Psoas muscle (tissue), 8 donors: ENCODE measurements at regions of chr18 and their contacts with region 1.

Region 1: GRCh38 chr18:21191596-21192307 is 50.3 kb upstream of the GREB1L start:
- DNase-seq: peak; percentile 28 to 59
- ATAC-seq: peak; percentile 39 to 77 (median 68)
- H3K4me3 ChIP-seq: no peak overlapping the region
- H3K27ac ChIP-seq: no peak overlapping the region
- H3K4me1 ChIP-seq: no peaks in the 10 kb centered on the region
- H3K27me3 ChIP-seq: no peaks in the 10 kb centered on the region
- CTCF ChIP-seq: peak; percentile 49

Region 2: DNA sequence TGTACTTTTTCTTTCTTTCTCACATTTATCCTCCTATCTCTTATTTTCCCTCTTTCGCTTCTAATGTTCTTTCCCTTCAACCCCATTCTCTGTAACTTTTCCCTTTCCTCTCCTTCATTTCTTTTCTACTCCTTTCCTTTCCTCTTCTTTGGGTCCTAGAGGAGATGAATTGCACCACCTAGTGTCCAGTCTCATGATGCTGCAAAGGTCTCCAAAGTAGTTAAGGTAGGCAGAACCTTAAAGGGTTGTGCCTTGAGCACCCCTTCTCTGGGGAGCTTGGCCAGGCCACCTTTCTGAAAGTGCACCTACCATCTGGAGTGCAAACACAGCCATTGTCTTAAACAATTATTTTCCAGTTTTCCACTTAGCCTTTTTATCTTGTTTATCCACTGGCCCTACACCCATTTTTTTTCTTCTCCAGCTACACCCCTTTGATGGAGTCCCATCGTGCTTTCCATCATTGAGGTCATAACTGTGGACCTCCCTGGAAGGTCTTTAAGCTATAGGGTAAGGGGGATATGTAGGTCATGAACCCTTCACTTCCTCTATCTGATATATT is 252.8 kb after region 1 on chr18:
- intact Hi-C with region 1: loop called (anchors 2 to 5 kb)
- DNase-seq: no peak
- ATAC-seq: peak; percentile 27 to 80 (median 70)
- H3K4me3 ChIP-seq: peak overlapping the region; percentile 37
- H3K27ac ChIP-seq: no peak overlapping the region
- H3K4me1 ChIP-seq: peaks cover 61% of the 10 kb centered on the region
- H3K27me3 ChIP-seq: no peaks in the 10 kb centered on the region
- CTCF ChIP-seq: peak; percentile 62

Region 3: GRCh38 chr18:21509062-21509461 is 317.3 kb after region 1 on chr18:
- intact Hi-C with region 1: loop called in 1 of 2 experiments (anchors 10 kb)
- DNase-seq: no peak
- ATAC-seq: peak in 3 of 4 donors; percentile 36 to 52 (median 45)
- H3K4me3 ChIP-seq: no peak overlapping the region
- H3K27ac ChIP-seq: no peak overlapping the region
- H3K4me1 ChIP-seq: no peaks in the 10 kb centered on the region
- H3K27me3 ChIP-seq: no peaks in the 10 kb centered on the region
- CTCF ChIP-seq: peak; percentile 11

Region 4: DNA sequence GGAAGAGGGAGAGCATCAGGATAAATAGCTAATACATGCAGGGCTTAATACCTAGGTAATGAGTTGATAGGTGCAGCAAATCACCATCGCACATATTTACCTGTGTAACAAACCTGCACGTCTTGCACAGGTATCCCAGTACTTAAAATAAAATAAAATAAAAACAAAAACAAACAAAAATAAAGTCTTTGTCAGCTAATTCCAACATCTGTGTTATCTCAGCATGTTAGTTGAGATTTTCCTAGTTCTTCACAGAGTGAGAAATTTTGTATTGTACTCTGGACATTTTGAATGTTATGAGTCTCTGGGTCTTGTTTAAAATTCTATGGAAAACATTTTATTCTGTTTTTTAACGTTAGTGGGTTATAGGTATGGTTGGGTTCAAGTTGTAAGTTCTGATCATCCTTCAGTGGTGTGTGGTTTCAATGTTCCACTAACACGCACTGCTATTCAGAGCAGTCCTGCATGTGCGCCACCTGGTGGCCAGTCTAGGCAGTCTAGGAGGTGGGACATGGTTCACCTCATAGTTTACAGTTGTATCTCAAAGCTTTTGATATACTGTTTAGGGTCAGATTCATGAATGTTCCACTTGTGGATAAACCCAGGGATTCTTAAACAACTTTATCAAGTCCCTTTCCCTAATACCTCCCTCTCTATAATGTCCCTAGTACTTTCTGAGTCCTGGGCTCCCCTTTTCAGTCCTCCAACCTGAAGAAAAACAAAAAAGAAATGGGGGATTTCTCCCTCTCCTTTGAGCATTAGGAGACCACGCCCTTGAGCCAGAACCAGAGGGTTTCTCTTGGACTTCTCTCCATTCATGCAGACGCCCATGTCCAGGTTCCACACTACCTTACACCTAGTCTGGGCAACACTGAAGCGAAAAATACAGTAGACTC is 764.3 kb after region 1 on chr18:
- intact Hi-C with region 1: loop called in 1 of 2 experiments (anchors 10 kb)
- DNase-seq: peak; percentile 74 to 82
- ATAC-seq: peak; percentile 69 to 80 (median 75)
- H3K4me3 ChIP-seq: no peak overlapping the region
- H3K27ac ChIP-seq: no peak overlapping the region
- H3K4me1 ChIP-seq: no peaks in the 10 kb centered on the region
- H3K27me3 ChIP-seq: peaks cover 0 to 2% (median 0%) of the 10 kb centered on the region in 3 donors
- CTCF ChIP-seq: peak; percentile 86

Region 5: GRCh38 chr18:22165049-22165602 is 973.4 kb after region 1 on chr18:
- intact Hi-C with region 1: no loop called
- DNase-seq: no peak
- ATAC-seq: no peak
- H3K4me3 ChIP-seq: peak overlapping the region; percentile 30
- H3K27ac ChIP-seq: no peak overlapping the region
- H3K4me1 ChIP-seq: peaks cover 7% of the 10 kb centered on the region
- H3K27me3 ChIP-seq: peaks cover 19 to 92% (median 47%) of the 10 kb centered on the region in 3 donors
- CTCF ChIP-seq: no peak